ENCODE measurements at regions of chr17 and their contacts with region 1.

Region 1: DNA sequence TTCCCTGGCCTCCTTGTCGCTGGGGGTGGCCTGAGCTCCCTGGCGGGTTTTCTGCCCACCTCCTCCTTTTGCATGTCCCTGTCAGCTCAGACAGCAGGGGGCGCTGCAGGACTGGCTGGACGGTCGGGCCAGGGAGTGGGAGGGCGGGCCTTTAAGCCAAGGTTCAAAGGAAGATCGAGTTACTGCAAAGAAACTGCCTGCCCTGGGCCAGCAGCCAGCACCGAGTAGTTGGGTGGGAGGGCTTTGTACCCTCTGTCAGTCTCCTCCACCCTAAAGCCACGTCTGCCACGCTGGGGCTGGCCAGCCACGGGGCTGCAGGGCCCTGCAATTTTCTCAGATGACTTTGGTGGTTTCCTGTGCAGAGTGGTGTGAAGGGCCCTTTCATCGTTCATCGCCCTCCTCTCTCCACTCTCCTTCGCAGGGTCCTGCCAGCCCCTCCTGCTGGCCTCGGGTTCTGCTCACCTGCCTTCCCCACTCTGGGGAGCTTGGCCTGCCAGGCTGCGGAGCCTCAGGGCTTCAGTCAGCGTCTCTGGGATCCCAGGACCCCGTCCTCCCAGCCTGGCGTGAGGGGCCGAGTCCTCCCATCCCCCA is 12.3 kb downstream of the GPR142 start:
- DNase-seq: peak; percentile 92
- ATAC-seq: peak; percentile 83
- H3K4me3 ChIP-seq: peak overlapping the region; percentile 49
- H3K27ac ChIP-seq: no peak overlapping the region
- H3K4me1 ChIP-seq: peaks cover 19% of the 10 kb centered on the region
- H3K27me3 ChIP-seq: peaks cover 22% of the 10 kb centered on the region
- CTCF ChIP-seq: peak; percentile 97

Region 2: DNA sequence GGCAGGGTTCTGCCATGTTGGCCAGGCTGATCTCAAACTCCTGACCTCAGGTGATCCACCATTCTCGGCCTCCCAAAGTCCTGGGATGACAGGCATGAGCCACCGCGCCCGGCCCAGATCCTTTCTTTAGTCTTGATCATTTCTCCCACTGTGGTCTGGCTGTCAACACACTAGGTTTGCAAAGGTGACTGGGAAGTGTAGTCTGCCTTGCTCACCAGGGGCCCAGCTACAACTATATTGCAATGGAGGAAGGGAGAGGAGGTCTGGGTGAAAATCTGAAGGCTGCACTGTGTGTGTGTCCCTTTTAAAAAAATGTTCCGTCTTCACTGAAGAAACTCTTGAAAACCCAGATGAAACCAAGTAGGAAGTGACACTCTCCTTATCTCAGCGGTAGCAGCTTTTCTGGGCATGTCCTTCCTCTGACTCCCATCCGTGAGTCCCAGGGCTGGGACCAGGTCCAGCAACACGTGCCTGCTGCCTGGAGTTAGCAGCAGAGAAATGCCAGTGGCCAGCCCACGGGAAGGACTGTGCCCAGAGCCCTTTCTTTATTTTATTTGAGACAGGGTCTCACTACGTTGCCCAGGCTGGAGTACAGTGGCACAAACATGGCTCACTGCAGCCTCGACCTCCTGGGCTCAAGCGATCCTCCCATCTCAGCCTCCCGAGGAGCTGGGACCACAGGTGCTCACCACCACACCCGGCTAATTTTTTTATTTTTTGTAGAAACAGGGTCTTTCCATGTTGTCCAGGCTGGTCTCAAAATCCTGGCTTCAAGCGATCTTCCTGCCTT is 71.4 kb before region 1 on chr17:
- CTCF ChIA-PET with region 1: no interaction called
- POLR2A ChIA-PET with region 1: no interaction called
- intact Hi-C with region 1: no loop called
- DNase-seq: no peak
- ATAC-seq: peak; percentile 40; the same call in 1 of the 2 replicates
- H3K4me3 ChIP-seq: no peak overlapping the region
- H3K27ac ChIP-seq: no peak overlapping the region
- H3K4me1 ChIP-seq: no peaks in the 10 kb centered on the region
- H3K27me3 ChIP-seq: peaks cover 14% of the 10 kb centered on the region
- CTCF ChIP-seq: no peak

Region 3: DNA sequence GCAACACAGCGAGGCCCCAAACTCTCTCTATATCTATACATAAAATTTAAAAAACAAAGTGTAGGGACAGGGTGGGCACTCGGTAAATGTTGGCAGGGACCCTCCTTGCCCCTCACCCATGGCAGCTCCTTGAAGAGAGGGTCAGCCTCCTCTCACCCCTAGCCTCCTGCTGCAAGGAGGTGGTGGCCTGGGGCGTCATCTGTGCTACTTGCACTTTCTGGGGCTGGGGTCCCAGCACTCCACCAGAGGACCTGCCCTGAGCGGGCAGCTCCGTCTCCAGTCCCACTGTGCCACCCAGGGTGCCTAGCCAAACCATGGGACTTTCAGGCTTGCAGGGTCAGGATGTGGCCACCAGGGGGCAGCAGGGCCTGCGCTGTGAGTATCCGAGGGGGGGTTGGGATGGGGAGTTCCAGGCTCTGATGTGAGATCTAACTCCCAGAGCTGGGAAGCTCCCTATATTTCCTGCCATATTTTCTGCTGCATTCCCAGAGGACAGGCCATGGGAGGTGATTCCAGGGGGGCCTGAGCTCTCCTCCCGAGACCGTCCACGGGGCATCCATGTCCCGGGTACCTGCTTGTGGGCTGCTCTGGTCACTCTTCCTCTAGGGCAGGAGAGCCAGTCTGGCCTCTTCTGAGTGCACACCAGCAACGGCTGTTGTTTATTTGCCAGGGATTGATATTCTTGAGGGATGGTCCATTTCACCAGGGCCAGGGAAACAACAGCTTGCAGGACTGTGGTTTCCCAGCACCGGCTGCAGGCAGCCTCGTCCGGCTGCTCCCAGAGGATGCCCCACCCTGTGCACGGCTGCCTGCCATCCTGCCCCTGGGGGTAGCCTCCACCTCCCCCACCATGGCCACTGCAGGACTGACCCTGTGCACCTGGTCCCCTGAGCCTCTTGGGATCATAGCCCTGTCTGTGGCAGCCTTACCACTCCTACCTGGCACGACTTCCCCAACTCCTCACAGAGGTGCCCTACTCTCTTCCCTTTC is 11.2 kb before region 1 on chr17:
- CTCF ChIA-PET with region 1: interaction called, 15 read pairs
- POLR2A ChIA-PET with region 1: no interaction called
- intact Hi-C with region 1: no loop called
- DNase-seq: peak; percentile 84
- ATAC-seq: peak; percentile 88
- H3K4me3 ChIP-seq: no peak overlapping the region
- H3K27ac ChIP-seq: no peak overlapping the region
- H3K4me1 ChIP-seq: 0 out of 2 replicates have a peak, but pooled peaks cover 4% of the 10 kb centered on the region
- H3K27me3 ChIP-seq: 0 out of 2 replicates have a peak, but pooled peaks cover 6% of the 10 kb centered on the region
- CTCF ChIP-seq: peak; percentile 98

Region 4: DNA sequence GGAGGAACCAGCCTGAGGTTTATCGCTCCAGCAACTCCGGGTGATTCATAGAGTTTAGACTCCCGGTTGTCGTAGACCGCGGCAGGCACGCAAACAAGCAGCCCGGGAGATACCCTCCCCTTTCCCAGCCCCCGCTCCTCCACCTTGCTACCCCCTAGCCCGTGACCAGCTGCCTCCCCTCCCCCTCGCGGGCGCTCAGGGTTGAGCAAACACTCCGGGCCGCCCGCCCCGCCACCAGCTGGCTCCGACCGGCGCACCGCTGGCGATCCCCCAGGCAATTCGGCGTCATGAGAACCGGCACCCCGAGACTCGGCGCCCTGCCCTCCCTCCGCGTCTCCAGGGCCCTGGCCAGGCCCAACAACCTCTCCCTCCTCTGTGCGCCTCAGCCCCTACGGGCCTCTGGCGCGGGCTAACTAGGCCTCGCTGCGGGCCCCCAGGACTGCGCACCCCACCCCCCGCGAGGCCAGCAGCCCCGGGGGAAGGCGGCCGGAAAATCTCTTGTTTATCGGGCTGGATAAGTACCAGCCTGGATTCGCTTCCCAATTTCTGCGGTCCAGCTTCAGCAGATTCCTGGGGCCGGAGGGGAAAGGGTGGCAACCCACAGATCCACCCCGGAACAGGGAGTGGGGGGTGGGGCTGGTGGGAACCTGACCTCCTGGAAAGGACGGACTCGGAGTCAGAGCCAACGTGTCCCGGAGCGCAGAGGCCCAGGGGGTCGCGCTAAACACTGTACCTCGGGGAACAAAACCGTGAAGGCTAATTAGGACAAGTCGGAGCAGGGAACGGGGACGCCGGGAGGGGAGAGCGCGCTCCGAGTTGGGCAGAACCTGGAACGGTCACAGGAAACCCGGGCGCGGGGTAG is 51.3 kb after region 1 on chr17:
- CTCF ChIA-PET with region 1: interaction called, 3 read pairs
- POLR2A ChIA-PET with region 1: interaction called, 4 read pairs
- intact Hi-C with region 1: loop called (anchors 1 kb)
- DNase-seq: peak; percentile 97
- ATAC-seq: peak; percentile 57
- H3K4me3 ChIP-seq: peak overlapping the region; percentile 80
- H3K27ac ChIP-seq: peak overlapping the region; percentile 99
- H3K4me1 ChIP-seq: peaks cover 54% of the 10 kb centered on the region
- H3K27me3 ChIP-seq: no peaks in the 10 kb centered on the region
- CTCF ChIP-seq: no peak

Region 5: GRCh38 chr17:74467221-74467951 is 87.8 kb after region 1 on chr17:
- CTCF ChIA-PET with region 1: no interaction called
- POLR2A ChIA-PET with region 1: no interaction called
- intact Hi-C with region 1: no loop called
- DNase-seq: no peak
- ATAC-seq: no peak
- H3K4me3 ChIP-seq: no peak overlapping the region
- H3K27ac ChIP-seq: no peak overlapping the region
- H3K4me1 ChIP-seq: no peaks in the 10 kb centered on the region
- H3K27me3 ChIP-seq: peaks cover 16% of the 10 kb centered on the region; the same call in 1 of the 2 replicates
- CTCF ChIP-seq: no peak

Region 6: GRCh38 chr17:74493381-74493833 is 113.8 kb after region 1 on chr17:
- CTCF ChIA-PET with region 1: interaction called, 5 read pairs
- POLR2A ChIA-PET with region 1: no interaction called
- intact Hi-C with region 1: loop called (anchors 1 kb)
- DNase-seq: peak; percentile 88
- ATAC-seq: peak; percentile 97
- H3K4me3 ChIP-seq: no peak overlapping the region
- H3K27ac ChIP-seq: no peak overlapping the region
- H3K4me1 ChIP-seq: no peaks in the 10 kb centered on the region
- H3K27me3 ChIP-seq: peaks cover 13% of the 10 kb centered on the region
- CTCF ChIP-seq: peak; percentile 96